ENCODE measurements at regions of chr5 and their contacts with region 1.

Region 1: DNA sequence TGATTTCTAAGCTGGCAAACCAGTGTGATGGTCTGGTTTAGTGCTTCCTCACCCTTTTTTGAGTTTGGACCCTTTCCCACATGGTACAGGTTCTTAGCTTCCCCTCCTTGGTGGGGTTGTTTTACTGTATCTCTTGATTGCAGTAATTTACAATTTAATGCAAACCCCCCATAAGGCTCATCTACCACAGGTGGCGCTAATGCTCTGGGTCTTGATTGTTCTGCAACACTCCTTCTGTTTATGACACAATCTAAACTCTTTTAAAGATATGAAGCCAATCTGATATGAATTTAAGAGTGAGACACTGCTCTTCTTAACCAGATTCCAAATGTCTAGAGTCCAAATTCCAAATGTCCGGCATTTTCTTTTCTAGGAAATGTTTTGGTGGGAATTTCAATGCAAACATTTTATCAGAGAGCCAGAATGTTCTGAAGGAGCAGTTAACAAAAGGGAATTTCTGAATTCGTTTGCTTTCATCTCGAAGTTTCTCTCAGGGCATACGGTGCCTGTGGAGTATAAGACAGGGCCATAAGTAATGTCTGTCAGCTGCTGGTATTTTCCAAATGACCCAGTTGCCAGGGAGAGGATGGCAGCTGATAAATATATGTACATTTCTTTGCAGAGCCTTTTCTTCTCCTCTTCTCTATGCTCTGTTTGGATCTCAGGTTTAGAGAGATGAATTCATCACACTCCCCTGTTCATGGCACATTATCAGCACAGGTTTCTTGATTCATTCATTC is 246.8 kb downstream of the ARHGAP26 start:
- DNase-seq: no peak
- ATAC-seq: peak; percentile 44 to 75 (median 60)
- H3K4me3 ChIP-seq: no peak overlapping the region
- H3K27ac ChIP-seq: peak overlapping the region; percentile 53
- H3K4me1 ChIP-seq: peaks cover 15% of the 10 kb centered on the region
- H3K27me3 ChIP-seq: no peaks in the 10 kb centered on the region
- CTCF ChIP-seq: peak; percentile 43

Region 2: DNA sequence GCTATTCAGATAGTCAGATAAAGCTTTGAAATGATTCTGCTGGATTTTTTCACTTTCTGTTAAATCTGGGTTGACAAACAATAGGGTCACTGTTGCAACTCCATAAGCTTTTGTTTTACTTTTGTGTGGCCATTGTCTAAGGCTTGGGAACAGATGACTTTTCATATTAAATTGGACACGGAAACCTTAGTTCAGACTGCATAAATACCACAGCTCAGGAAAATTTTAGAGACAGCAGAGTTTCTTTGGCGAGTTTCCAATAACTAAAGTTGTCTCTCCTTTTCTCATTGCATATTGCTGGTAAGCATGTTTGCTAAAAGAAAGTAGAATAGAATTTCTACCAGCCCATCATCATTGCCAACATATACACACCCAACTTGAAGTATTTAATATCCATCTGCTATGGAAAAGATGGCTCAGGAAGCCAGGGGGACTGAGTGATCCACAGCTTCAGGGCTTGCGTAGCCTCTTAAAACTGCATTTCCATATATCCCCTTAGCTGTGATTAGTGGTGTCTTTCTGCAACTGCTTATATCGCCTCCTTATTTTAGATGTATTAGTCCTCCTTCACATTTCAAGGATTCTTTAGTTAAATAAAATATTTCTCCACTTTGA is 78.6 kb before region 1 on chr5:
- intact Hi-C with region 1: no loop called
- DNase-seq: no peak
- ATAC-seq: no peak
- H3K4me3 ChIP-seq: no peak overlapping the region
- H3K27ac ChIP-seq: peak overlapping the region; percentile 59
- H3K4me1 ChIP-seq: peaks cover 49% of the 10 kb centered on the region
- H3K27me3 ChIP-seq: no peaks in the 10 kb centered on the region
- CTCF ChIP-seq: no peak

Region 3: GRCh38 chr5:143679777-143680176 is 662.8 kb after region 1 on chr5:
- intact Hi-C with region 1: loop called in 1 of 2 experiments (anchors 10 kb)
- DNase-seq: no peak
- ATAC-seq: peak; percentile 61 to 84 (median 77)
- H3K4me3 ChIP-seq: no peak overlapping the region
- H3K27ac ChIP-seq: no peak overlapping the region
- H3K4me1 ChIP-seq: peaks cover 21% of the 10 kb centered on the region
- H3K27me3 ChIP-seq: no peaks in the 10 kb centered on the region
- CTCF ChIP-seq: no peak